HAP-1 (cell line): ENCODE measurements at regions of chr2 and their contacts with region 1.

Region 1: GRCh38 chr2:178112202-178113152 is at the start of gene RBM45:
- DNase-seq: peak; percentile 89 to 95
- H3K4me3 ChIP-seq: peak within 1 kb of the TSS; percentile 57
- H3K4me1 ChIP-seq: peaks cover 2% of the 10 kb centered on the region
- H3K27me3 ChIP-seq: no peaks in the 10 kb centered on the region

Region 2: DNA sequence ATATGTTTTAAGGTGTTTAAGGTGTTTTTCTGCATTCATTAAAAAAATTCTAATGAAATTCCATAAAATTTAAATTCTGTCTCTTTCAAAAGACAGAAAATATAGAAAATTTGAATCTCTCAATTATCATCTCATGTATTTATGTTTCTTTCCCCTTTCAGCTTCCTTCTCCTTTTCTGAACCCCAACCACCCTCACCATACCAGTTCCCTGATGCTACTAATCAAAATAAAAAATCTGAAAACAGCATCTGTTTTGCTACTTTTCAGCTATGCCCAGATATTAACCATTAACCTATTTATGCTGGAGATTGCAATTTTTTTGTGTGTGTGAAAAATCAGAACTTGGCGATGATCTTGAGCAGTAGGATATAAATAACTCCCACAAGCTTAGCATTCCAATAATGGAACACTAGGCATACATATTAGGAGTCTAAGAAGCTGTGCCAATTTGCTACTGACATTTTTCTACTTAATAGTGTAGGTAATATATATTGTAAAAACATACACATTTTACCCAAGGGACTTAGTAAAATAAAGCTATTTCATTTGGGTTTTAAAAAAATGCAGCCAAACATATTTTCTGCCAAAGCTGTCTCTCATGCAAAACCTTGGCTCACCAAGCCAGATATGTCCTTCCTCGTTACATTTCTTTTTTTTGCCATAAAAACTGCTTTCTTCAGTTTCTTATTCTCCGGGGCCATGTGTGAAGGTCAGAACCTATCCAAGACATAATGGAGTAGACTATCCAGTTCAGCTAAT is 752.5 kb before region 1 on chr2:
- in situ Hi-C with region 1: no loop called
- DNase-seq: no peak
- H3K4me3 ChIP-seq: no peak overlapping the region
- H3K4me1 ChIP-seq: no peaks in the 10 kb centered on the region
- H3K27me3 ChIP-seq: no peaks in the 10 kb centered on the region; the same call in 1 of the 2 replicates

Region 3: DNA sequence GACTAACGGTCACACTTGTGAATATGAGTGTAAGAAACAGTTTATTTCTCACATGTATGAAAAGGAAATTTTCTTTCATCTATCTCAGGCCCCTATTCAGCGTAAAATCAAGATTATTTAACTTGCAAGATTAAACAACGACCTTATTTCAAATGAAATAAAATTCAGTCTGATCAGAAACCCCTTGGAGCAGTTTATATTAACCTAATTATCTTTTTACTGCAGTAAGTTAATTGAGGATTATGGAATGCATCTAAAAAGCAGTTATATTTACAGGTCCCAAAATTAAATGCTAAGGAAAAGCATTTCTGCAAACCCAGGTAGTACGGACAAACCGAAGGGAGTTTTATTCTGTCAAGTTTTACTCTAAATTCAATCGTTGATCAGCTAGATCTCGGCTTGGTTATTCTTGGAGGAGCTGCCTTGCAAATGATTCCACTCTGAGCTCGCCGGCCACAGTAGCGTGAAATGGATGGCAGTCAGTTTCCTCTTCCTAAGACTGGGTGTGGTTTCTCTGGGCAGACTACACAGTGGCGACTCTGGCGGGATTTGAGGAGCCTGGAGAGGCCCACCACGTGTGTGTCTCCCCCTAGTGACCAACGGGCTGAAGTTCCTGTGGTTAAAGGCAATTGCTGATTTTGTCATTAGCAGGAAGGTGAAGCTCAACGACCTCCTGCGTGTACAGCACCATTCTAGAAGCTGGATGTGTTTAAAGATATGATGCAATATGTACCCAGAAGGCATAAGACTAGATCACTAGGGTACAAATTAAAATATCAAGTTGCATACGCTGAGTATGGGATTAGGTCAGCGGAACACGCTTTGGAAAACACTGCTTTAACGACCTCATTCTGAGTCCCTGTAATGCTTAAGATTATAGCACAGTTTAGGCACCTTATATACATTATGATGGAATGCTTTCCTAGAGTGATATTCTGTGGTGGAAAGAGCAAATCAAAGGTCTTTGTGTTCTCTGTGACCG is 302.1 kb after region 1 on chr2:
- in situ Hi-C with region 1: loop called (anchors 10 kb)
- DNase-seq: peak; percentile 95 to 97
- H3K4me3 ChIP-seq: peak overlapping the region; percentile 48
- H3K4me1 ChIP-seq: peaks cover 21% of the 10 kb centered on the region
- H3K27me3 ChIP-seq: no peaks in the 10 kb centered on the region